ENCODE measurements at regions of chr19 and their contacts with region 1.

Region 1: DNA sequence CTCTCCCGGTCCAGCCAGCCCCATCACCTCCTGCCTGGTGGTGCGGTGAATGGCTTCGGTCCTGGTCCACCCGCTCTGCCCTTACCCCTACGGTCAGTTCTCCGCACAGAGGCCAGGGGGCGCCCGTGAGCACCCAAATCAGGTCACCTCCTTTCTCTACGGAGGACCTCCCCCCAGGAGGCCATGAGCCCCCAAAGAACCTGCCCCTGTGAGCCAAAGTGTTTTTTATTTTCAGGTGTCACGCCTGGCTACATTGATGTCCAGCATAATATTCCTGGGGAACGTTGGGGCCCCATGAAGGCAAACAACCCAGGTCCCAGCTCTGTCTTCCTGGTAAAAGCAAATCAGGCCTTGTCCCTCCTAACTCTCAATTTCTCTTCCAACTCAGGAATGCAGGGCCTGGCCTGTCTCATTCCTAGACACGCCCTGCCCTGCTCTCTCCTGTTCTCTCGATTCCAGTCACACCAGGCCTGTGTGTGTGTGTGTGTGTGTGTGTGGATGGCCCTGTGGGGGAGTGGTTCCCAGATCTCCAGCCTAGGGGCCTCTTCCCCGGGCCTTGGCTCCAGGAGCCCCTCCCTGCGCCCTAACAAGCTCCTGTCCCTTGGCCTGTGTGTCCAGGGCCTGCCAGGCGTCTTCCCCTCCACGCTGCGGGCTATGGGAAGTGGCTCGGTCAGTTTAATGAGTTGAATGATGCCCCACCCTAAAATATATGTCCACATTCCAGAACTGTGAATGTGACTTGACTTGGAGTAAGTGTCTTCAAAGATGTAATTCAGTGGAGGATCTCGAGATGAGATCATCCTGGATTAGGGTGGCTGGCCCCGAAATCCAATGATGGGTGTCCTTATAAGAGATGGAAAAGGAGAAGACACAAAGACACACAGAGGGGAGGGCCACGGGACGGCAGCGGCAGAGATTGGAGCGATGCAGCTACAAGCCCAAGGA is 9.8 kb upstream of the GIPC1 start:
- DNase-seq: peak in 1 of 3 donors; percentile 58
- ATAC-seq: peak; percentile 43 to 65 (median 52)
- H3K4me3 ChIP-seq: no peak overlapping the region
- H3K27ac ChIP-seq: no peak overlapping the region
- H3K4me1 ChIP-seq: peaks cover 0 to 22% (median 6%) of the 10 kb centered on the region in 4 donors
- H3K27me3 ChIP-seq: no peaks in the 10 kb centered on the region
- CTCF ChIP-seq: peak; percentile 41 to 64 (median 58)
- POLR2A ChIP-seq: no peak

Region 2: DNA sequence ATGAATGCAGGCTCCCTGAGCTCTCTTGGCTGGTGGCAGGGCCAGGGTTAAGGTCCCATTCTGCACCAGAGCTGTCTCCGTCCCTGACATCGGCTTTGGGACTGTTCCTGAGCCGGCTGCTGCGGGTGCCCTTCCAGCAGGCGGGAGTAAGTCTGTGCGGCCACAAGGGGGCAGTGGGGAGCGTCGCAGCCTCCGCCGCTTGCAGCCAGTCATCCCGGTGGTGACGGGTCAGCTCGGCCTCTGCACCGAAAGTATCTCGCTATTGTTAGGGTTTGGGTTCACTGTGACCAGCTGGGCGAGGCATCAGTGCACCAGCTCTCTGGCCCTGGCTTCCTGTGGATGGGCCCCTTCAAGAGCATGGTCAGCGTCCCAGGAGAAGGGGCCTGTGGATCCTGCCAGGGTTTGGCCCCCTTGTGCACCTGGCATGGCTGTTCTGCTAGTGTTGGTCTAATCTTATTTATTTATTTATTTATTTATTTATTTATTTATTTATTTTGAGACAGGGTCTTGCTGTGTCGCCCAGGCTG is 51.0 kb after region 1 on chr19:
- intact Hi-C with region 1: loop called in 1 of 2 experiments (anchors 10 kb)
- DNase-seq: peak; percentile 79 to 85 (median 84)
- ATAC-seq: peak; percentile 75 to 80 (median 78)
- H3K4me3 ChIP-seq: no peak overlapping the region
- H3K27ac ChIP-seq: no peak overlapping the region
- H3K4me1 ChIP-seq: peaks cover 0 to 42% (median 11%) of the 10 kb centered on the region in 4 donors
- H3K27me3 ChIP-seq: no peaks in the 10 kb centered on the region
- CTCF ChIP-seq: peak; percentile 83 to 99 (median 96)
- POLR2A ChIP-seq: no peak